ENCODE measurements at regions of chr2 and their contacts with region 1.

Region 1: DNA sequence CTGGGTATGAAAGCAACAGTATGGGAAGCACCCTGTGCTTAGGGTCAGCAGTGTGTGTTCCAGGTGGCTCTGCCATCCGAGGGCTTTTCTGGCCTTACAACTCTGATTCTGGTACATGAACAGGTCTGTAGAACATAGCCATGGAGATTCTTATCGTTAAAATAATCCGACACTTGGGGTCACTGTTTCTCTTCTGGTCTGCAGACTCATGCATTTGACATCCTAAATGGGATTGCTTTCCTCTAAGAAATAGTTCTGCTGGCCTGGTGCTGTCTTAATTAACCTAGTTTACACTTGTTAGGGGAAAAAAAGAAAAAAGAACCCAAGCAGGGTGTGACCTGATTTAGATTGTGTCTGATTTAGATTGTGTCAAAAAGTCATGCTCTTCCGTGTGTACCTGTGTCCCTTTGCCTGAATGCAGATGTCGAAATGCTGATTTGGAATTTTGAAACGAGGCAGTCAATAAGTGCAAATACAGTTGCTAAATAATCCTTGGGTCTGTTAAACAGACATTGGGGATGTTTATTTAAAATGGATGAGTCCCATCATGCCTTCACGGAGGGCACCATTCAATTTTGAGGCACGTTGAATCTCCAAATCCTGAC is 59.6 kb downstream of the TRPM8 start:
- DNase-seq: peak; percentile 70
- H3K4me3 ChIP-seq: no peak overlapping the region
- H3K27ac ChIP-seq: no peak overlapping the region
- H3K4me1 ChIP-seq: peaks cover 61% of the 10 kb centered on the region
- H3K27me3 ChIP-seq: no peaks in the 10 kb centered on the region
- CTCF ChIP-seq: peak; percentile 60 to 64

Region 2: GRCh38 chr2:234102112-234102511 is 125.3 kb after region 1 on chr2:
- CTCF ChIA-PET with region 1: no interaction called
- dilution Hi-C with region 1: no loop called
- in situ Hi-C with region 1: no loop called
- intact Hi-C with region 1: loop called (anchors 1 kb)
- DNase-seq: peak; percentile 70
- H3K4me3 ChIP-seq: no peak overlapping the region
- H3K27ac ChIP-seq: no peak overlapping the region
- H3K4me1 ChIP-seq: peaks cover 9% of the 10 kb centered on the region
- H3K27me3 ChIP-seq: no peaks in the 10 kb centered on the region
- CTCF ChIP-seq: peak; percentile 29 to 41

Region 3: GRCh38 chr2:234288974-234289455 is 312.2 kb after region 1 on chr2:
- CTCF ChIA-PET with region 1: no interaction called
- dilution Hi-C with region 1: no loop called
- in situ Hi-C with region 1: no loop called
- intact Hi-C with region 1: loop called (anchors 5 kb)
- DNase-seq: peak; percentile 24
- H3K4me3 ChIP-seq: no peak overlapping the region
- H3K27ac ChIP-seq: no peak overlapping the region
- H3K4me1 ChIP-seq: peaks cover 32% of the 10 kb centered on the region
- H3K27me3 ChIP-seq: no peaks in the 10 kb centered on the region
- CTCF ChIP-seq: peak; percentile 61 to 78

Region 4: DNA sequence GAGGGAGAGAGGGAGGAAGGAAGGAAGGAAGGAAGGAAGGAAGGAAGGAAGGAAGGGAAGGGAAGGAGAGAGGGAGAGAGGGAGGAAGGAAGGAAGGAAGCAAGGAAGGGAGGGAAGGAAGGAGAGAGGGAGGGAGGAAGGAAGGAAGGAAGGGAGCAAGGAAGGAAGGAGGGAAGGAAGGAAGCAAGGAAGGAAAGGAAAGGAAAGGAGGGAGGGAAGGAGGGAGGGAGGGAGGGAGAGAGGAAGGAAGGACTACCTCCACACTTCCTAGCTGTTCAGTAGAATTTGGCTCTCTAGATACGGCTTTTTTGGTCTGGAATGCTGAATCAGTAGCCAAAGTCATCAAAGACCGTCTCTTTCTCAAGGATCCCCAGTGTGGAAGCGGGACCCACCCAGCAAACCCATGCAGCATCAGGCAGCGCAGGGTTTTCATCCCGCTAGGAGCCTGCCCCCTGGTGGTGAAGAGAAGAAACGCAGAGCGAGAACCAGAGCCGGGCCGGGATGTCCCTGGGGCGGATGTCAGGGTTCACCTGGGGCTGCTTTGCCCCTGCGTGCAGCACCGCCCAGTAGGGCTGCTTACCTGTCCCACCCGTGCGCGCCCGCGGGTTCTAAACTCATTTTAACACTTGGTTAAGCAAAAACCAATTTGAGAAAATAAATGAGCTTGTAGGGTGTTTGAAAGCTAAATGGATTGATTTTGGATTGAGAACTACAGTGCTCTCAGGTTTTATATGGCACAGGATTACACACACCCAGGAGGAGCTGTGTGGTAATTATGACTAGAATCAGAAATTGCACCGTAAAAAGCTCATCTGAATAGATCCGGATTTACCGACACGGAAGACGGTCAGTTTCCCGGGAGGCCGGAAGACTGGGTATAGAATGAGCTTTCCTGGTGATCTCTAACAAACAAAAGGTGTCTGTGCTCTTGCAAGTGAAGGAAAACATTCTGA is 568.1 kb after region 1 on chr2:
- CTCF ChIA-PET with region 1: no interaction called
- dilution Hi-C with region 1: no loop called
- in situ Hi-C with region 1: loop called (anchors 10 kb)
- intact Hi-C with region 1: loop called (anchors 1 kb)
- DNase-seq: peak; percentile 47
- H3K4me3 ChIP-seq: no peak overlapping the region
- H3K27ac ChIP-seq: no peak overlapping the region
- H3K4me1 ChIP-seq: peaks cover 6% of the 10 kb centered on the region
- H3K27me3 ChIP-seq: no peaks in the 10 kb centered on the region
- CTCF ChIP-seq: peak; percentile 87 to 92

Region 5: DNA sequence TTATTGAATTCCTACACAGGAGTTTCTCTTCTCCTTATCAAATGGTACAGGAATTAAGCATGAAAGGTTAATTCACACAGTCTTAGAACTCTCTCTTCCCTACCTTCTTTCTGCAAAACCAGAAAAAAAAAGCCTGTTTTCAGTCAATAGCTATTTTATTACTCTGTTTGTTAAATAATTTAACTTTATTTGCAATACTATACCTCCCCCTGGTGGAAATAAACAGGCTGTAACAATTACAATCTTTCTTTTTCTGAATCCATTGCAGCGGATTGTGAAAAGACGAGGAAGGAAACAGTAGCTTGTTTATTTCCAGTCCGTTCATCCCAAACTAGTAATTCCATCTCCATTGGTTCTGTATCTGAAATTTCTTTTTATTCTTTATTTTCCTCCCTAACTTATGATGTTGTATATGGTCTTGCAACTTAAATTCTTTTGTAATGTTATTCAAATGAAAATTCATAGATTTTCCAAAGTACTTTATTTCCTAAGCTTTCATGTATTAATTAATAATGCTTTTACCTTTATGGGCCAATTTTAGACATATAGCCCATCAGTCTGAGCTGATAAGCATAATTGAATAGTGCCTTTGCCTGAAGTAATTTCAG is 1140.2 kb after region 1 on chr2:
- CTCF ChIA-PET with region 1: no interaction called
- dilution Hi-C with region 1: loop called (anchors 25 kb)
- in situ Hi-C with region 1: loop called in 1 of 2 experiments (anchors 25 kb)
- intact Hi-C with region 1: loop called (anchors 5 kb)
- DNase-seq: peak; percentile 24
- H3K4me3 ChIP-seq: no peak overlapping the region
- H3K27ac ChIP-seq: no peak overlapping the region
- H3K4me1 ChIP-seq: no peaks in the 10 kb centered on the region
- H3K27me3 ChIP-seq: no peaks in the 10 kb centered on the region
- CTCF ChIP-seq: peak; percentile 58 to 66